Heart right ventricle (tissue), 16 donors: ENCODE measurements at regions of chr12 and their contacts with region 1.

Region 1: DNA sequence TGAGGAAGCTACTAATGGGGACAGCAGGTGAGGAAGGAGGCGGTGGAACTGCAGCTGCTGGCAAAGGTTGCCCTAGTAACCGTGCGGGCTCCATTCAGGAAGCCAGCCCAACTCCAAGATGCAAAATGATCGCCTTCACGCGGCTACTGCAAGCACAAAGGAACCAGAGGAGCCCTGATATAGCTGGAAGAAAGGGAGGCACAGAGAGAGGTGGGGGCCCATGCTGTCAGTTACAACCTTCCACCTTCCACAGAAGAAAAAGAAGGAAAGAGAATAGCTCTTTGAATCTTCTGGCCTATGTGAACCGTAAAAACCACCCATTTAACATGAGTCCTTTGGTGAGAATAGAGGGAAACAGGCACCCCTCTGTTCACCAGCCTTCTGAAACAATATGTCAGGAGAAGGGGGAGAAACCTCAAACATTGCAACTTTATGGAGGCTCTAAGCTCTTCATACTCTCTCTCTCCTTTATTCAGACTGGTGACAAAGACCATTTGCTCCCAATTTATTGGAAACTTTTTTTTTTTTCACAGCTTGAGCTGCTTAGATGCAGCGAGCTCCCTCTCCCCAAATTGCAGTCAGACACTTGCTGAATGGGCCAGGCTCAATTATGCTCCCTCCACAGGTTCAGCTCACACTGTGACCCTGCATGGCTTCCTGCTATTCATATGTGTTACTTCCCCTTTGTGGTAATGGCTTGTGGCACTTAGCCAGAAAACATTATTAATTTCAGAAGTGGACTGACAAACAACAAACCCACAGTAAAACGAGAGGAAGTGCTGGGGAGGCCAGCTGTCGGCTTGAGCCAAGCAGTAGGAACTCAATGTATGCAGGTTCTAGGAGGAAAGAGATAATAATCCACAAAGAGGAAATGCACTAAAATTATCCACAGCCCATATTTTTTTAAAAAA is 6.2 kb downstream of the DUSP6 start:
- DNase-seq: peak; percentile 33 to 80
- ATAC-seq: peak; percentile 60 to 86 (median 80)
- H3K4me3 ChIP-seq: peak overlapping the region in 6 of 10 donors; percentile 66 to 94 (median 84)
- H3K27ac ChIP-seq: peak overlapping the region; percentile 36 to 100 (median 68)
- H3K4me1 ChIP-seq: peaks cover 15 to 68% (median 48%) of the 10 kb centered on the region in 9 donors
- H3K27me3 ChIP-seq: no peaks in the 10 kb centered on the region
- CTCF ChIP-seq: no peak

Region 2: DNA sequence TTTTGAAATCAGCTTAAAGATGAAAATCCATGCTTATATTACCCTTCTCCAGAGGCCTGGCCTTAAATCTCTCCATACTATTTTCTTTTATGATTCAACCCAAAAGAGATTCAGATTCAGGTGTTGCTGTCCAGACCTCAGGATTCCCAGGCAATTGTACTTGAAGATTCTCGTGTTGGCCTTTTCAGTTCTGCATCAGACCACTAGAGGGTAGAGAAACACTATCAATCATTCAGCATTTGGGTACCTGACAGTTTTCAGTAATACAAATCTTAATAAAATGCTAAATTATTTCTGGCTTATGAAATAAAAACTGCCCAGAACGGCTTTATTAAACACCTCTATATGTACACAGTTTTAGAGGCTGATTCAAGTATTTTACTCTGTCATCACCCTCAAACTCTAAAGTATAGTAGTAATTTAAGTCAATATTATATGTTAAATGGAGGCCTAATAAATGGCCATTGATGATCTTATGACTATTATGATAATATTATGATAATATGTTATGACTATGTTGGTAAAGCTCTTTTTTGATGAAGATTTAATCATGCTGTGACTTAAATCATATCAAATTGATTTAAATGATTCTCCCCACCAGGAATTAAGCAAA is 294.9 kb before region 1 on chr12:
- intact Hi-C with region 1: loop called in 7 of 10 experiments (anchors 1 to 10 kb)
- DNase-seq: peak in 1 of 2 donors; percentile 44
- ATAC-seq: peak in 6 of 8 donors; percentile 70 to 85 (median 79)
- H3K4me3 ChIP-seq: no peak overlapping the region
- H3K27ac ChIP-seq: no peak overlapping the region
- H3K4me1 ChIP-seq: peaks cover 0 to 7% (median 0%) of the 10 kb centered on the region in 9 donors
- H3K27me3 ChIP-seq: no peaks in the 10 kb centered on the region
- CTCF ChIP-seq: peak; percentile 83 to 97 (median 93)

Region 3: GRCh38 chr12:89135976-89136634 is 210.0 kb before region 1 on chr12:
- intact Hi-C with region 1: loop called in 2 of 10 experiments (anchors 5 to 10 kb)
- DNase-seq: no peak
- ATAC-seq: peak in 1 of 8 donors; percentile 32
- H3K4me3 ChIP-seq: no peak overlapping the region
- H3K27ac ChIP-seq: no peak overlapping the region
- H3K4me1 ChIP-seq: peaks cover 0 to 24% (median 11%) of the 10 kb centered on the region in 9 donors
- H3K27me3 ChIP-seq: no peaks in the 10 kb centered on the region
- CTCF ChIP-seq: no peak

Region 4: GRCh38 chr12:89212339-89212771 is 133.7 kb before region 1 on chr12:
- intact Hi-C with region 1: loop called in 5 of 10 experiments (anchors 5 to 10 kb)
- DNase-seq: peak; percentile 32 to 43
- ATAC-seq: peak; percentile 77 to 96 (median 95)
- H3K4me3 ChIP-seq: no peak overlapping the region
- H3K27ac ChIP-seq: peak overlapping the region; percentile 4 to 86 (median 57)
- H3K4me1 ChIP-seq: peaks cover 0 to 49% (median 12%) of the 10 kb centered on the region in 9 donors
- H3K27me3 ChIP-seq: no peaks in the 10 kb centered on the region
- CTCF ChIP-seq: no peak

Region 5: DNA sequence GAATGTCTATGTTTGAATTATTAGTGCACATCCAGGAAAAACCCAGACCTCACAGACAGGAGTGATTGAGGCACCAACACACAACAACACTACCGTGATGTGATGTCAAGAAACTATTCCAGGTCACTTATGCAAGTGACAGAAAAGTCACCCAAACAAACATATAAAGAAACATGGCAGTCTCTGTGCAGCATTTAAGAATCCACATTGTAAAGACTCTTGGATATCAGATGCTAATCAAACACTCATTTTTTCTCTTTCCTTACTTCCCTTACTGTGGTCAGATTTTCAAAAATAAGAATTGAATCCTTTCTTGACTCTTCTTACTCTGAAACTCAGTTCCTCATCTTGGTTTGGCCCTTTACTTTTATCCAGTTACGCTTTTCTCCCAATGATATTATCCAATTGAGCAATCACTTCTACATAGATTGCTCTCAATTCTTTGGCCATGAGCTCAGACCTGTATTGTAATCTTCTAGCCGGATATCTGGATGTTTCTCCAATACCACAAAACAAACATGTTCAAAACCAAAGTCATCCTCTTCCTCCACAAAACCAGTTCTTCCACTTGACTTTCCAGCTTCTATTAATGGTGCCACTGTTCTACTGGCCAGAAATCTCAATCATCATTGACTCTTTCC is 109.2 kb before region 1 on chr12:
- intact Hi-C with region 1: loop called in 6 of 10 experiments (anchors 5 to 10 kb)
- DNase-seq: no peak
- ATAC-seq: no peak
- H3K4me3 ChIP-seq: no peak overlapping the region
- H3K27ac ChIP-seq: peak overlapping the region in 3 of 10 donors; percentile 18 to 76 (median 64)
- H3K4me1 ChIP-seq: peaks cover 0 to 53% (median 27%) of the 10 kb centered on the region in 9 donors
- H3K27me3 ChIP-seq: no peaks in the 10 kb centered on the region
- CTCF ChIP-seq: no peak

Region 6: GRCh38 chr12:89319606-89320005 is 26.5 kb before region 1 on chr12:
- intact Hi-C with region 1: no loop called
- DNase-seq: no peak
- ATAC-seq: no peak
- H3K4me3 ChIP-seq: no peak overlapping the region
- H3K27ac ChIP-seq: no peak overlapping the region
- H3K4me1 ChIP-seq: peaks cover 0 to 30% (median 18%) of the 10 kb centered on the region in 9 donors
- H3K27me3 ChIP-seq: no peaks in the 10 kb centered on the region
- CTCF ChIP-seq: no peak